PC-9 (cell line): ENCODE measurements at regions of chr3 and their contacts with region 1.

Region 1: DNA sequence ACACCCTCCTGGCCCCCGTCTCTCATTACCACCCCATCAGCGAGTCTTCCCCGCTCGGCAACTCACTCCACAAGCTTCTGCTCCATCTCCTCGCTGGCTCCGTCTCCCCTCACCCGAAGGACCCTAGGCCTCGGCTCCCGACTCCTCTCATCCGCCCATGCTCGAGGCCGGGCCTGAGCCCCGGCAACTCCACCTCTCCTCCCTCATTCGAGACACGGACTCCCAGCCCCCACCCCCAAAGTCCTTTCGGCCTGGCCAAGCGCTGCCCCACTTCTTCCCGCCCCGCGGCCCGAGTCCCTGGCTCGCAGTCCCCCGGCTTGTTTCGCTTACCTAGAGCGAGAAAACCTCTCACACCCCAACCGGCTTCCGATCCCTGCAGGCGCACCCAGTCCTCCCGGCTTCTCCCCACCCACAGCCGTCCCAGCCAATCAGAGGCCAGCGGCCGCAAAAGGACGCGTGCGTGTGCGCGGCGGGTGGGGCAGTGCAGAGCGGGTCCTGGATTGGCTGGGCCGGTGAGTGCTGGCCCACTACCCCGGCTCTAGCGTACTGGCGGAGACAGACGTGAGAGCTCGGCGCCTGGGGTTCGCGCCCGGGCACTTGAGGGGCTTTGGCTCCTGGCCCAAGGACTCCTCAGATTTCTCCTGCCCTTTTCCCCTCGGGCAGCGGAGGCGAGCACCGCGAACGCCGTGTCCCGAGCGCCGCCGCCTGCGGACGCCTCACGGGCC is at the start of gene HIGD1A:
- DNase-seq: peak; percentile 91 to 93
- H3K4me3 ChIP-seq: peak within 1 kb of the TSS; percentile 84
- H3K27ac ChIP-seq: peak within 1 kb of the TSS; percentile 81
- H3K4me1 ChIP-seq: peaks cover 24% of the 10 kb centered on the region
- H3K27me3 ChIP-seq: no peaks in the 10 kb centered on the region
- CTCF ChIP-seq: no peak
- total RNA-seq, gene HIGD1A: 48.2 and 69.7 TPM in 2 replicates

Region 2: DNA sequence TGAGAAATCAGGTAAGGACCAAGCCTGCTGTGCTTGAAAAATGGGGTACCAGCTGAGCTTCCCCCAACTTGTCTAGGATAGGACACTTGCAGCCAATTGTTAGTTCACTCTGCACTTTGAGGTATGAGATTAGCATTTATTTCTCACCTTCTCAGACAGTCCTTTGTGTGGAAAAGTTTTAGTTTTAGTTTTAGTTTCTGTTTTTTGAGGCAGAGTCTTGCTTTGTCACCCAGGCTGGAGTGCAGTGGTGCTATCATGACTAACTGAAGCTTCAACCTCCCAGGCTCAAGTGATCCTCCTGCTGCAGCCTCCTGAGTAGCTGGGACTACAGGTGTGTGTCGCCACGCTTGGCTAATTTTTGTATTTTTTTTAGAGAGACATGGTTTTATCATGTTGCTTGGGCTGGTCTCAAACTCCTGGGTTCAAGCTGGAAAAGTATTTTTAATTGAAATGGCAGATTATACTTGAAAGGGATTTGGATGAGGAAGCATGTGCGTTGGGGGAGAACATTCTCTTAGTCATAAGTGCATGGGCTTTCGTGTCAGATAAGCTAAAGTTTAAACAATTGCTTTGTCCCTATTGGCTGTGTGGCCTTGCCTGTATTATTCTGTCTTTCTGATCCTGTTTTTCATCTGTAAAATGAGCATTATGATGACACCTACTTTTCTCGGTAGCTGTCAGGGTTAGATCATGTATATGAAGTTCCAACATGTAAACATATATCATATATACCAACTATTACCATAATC is 513.1 kb before region 1 on chr3:
- CTCF ChIA-PET with region 1: no interaction called
- POLR2A ChIA-PET with region 1: no interaction called
- intact Hi-C with region 1: no loop called
- DNase-seq: no peak
- H3K4me3 ChIP-seq: no peak overlapping the region
- H3K27ac ChIP-seq: no peak overlapping the region
- H3K4me1 ChIP-seq: peaks cover 7% of the 10 kb centered on the region; the same call in 1 of the 2 replicates
- H3K27me3 ChIP-seq: 0 out of 2 replicates have a peak, but pooled peaks cover 9% of the 10 kb centered on the region
- CTCF ChIP-seq: no peak

Region 3: DNA sequence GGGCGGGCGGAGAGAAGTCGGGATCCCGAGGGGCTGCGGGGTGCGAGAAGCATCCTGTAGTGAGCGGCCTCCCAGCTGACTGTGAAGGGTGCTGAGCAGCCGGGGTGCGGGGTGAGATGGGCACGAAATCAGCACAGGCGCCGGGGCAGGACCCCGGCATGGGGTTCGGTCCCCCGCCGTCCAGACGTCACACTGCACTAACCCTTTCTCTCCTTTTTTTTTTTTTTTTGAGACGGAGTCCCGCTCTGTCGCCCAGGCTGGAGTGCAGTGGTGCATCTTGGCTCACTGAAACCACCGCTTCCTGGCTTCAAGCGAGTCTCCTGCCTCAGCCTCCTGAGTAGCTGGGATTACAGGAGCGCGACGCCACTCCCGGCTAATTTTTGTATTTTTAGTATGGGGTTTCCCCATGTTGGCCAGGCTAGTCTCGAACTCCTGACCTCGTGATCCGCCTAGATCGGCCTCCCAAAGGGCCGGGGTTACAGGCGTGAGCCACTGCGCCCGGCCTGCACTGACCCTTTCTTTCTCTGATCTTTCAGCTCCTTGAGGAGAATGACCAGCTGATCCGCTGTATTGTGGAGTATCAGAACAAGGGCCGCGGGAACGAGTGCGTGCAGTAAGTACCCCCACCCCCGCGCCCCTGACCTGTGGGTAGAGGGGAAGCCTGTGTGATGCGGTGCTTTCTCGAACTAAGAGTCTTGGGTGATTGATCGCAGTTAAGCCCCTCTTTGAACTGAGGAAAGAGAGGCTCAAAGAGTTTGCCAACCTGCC is 213.1 kb before region 1 on chr3:
- CTCF ChIA-PET with region 1: no interaction called
- POLR2A ChIA-PET with region 1: no interaction called
- intact Hi-C with region 1: loop called (anchors 5 kb)
- DNase-seq: no peak
- H3K4me3 ChIP-seq: peak overlapping the region; percentile 65
- H3K27ac ChIP-seq: peak overlapping the region; percentile 26
- H3K4me1 ChIP-seq: peaks cover 21% of the 10 kb centered on the region
- H3K27me3 ChIP-seq: no peaks in the 10 kb centered on the region
- CTCF ChIP-seq: no peak

Region 4: GRCh38 chr3:42820746-42821051 is 16.4 kb after region 1 on chr3:
- CTCF ChIA-PET with region 1: interaction called, 5 read pairs
- POLR2A ChIA-PET with region 1: interaction called, 24 read pairs
- intact Hi-C with region 1: no loop called
- DNase-seq: no peak
- H3K4me3 ChIP-seq: no peak overlapping the region
- H3K27ac ChIP-seq: peak overlapping the region; percentile 82
- H3K4me1 ChIP-seq: peaks cover 53% of the 10 kb centered on the region
- H3K27me3 ChIP-seq: no peaks in the 10 kb centered on the region
- CTCF ChIP-seq: no peak

Region 5: GRCh38 chr3:42831321-42831713 is 27.0 kb after region 1 on chr3:
- CTCF ChIA-PET with region 1: no interaction called
- POLR2A ChIA-PET with region 1: no interaction called
- intact Hi-C with region 1: loop called (anchors 2 kb)
- DNase-seq: peak in 1 of 2 experiments; percentile 46
- H3K4me3 ChIP-seq: no peak overlapping the region
- H3K27ac ChIP-seq: no peak overlapping the region
- H3K4me1 ChIP-seq: peaks cover 58% of the 10 kb centered on the region
- H3K27me3 ChIP-seq: no peaks in the 10 kb centered on the region
- CTCF ChIP-seq: peak; percentile 74

Region 6: GRCh38 chr3:42856544-42856943 is 52.3 kb after region 1 on chr3:
- CTCF ChIA-PET with region 1: no interaction called
- POLR2A ChIA-PET with region 1: no interaction called
- intact Hi-C with region 1: no loop called
- DNase-seq: no peak
- H3K4me3 ChIP-seq: no peak overlapping the region
- H3K27ac ChIP-seq: no peak overlapping the region
- H3K4me1 ChIP-seq: no peaks in the 10 kb centered on the region
- H3K27me3 ChIP-seq: no peaks in the 10 kb centered on the region
- CTCF ChIP-seq: no peak

Region 7: DNA sequence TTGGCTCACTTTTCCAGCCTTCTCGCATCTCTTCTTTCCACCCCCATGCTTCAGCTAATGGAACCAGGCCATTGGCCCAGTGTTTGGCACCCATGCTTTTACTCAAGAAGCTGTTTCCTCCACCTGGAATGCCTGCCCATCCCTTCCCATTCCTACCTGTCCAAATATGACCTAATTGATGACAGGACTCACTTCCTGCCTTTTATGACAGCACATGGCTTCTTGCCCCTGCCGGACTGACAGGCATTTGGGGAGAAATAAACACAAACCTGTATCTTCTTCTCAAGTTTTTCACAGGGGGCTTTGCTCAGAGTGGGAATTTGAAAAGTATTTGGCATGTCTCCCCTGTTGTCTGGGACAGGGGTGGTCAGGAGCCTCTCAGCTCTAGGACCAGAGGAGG is 1006.5 kb after region 1 on chr3:
- CTCF ChIA-PET with region 1: no interaction called
- POLR2A ChIA-PET with region 1: no interaction called
- intact Hi-C with region 1: no loop called
- DNase-seq: no peak
- H3K4me3 ChIP-seq: no peak overlapping the region
- H3K27ac ChIP-seq: no peak overlapping the region
- H3K4me1 ChIP-seq: no peaks in the 10 kb centered on the region
- H3K27me3 ChIP-seq: no peaks in the 10 kb centered on the region
- CTCF ChIP-seq: no peak